Activated CD4-positive, alpha-beta memory T cell treated with anti-CD3 and anti-CD28 coated beads for 36 hours (primary cell): ENCODE measurements at regions of chr11 and their contacts with region 1.

Region 1: DNA sequence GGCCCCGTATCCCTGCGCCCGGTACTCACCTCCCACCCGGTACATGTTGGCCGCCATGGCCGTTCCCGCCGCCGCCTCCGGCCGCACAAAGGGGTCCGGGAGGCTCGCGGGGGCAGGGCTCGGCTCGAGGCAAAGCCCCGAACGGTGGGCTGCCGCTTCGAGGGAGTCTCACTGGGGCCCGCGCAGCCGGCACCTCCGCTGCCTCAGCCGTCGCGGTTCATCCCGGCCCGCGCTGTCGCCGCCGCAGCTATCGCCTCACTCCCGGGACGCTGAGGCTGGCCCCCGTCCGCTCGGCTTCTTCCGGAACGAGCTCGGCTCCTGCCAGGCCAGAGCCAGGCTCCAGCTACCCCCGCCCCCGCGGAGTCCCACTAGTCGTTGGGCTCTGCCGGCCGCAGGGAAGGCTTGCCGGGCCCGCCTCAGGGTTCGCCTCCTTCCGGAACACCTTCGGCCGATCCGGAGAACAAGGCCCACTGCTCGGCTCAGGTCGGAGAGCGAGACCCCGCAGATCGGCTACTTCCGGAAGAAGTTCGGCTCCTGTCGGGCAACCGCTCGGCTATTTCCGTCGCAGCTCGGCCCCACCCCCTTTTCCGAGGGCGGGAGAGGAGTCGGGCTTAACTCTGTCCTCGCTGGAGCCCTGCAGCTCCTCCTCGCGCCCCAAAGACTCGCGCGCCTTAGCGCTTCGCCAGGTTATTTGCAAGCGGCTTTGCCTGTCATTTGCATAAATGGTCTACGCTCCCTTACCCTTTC is at the start of gene MTA2:
- DNase-seq: peak; percentile 100
- H3K4me3 Mint-ChIP-seq: peak within 1 kb of the TSS; percentile 81
- H3K27ac Mint-ChIP-seq: peak within 1 kb of the TSS; percentile 97
- H3K4me1 Mint-ChIP-seq: peaks cover 56% of the 10 kb centered on the region
- H3K27me3 Mint-ChIP-seq: no peaks in the 10 kb centered on the region
- total RNA-seq, gene MTA2: 166 to 167 TPM

Region 2: GRCh38 chr11:62081378-62082291 is 519.9 kb before region 1 on chr11:
- CTCF ChIA-PET with region 1: no interaction called
- POLR2A ChIA-PET with region 1: no interaction called
- intact Hi-C with region 1: no loop called
- DNase-seq: peak; percentile 90
- H3K4me3 Mint-ChIP-seq: no peak overlapping the region
- H3K27ac Mint-ChIP-seq: no peak overlapping the region
- H3K4me1 Mint-ChIP-seq: peaks cover 6% of the 10 kb centered on the region
- H3K27me3 Mint-ChIP-seq: peaks cover 4% of the 10 kb centered on the region

Region 3: DNA sequence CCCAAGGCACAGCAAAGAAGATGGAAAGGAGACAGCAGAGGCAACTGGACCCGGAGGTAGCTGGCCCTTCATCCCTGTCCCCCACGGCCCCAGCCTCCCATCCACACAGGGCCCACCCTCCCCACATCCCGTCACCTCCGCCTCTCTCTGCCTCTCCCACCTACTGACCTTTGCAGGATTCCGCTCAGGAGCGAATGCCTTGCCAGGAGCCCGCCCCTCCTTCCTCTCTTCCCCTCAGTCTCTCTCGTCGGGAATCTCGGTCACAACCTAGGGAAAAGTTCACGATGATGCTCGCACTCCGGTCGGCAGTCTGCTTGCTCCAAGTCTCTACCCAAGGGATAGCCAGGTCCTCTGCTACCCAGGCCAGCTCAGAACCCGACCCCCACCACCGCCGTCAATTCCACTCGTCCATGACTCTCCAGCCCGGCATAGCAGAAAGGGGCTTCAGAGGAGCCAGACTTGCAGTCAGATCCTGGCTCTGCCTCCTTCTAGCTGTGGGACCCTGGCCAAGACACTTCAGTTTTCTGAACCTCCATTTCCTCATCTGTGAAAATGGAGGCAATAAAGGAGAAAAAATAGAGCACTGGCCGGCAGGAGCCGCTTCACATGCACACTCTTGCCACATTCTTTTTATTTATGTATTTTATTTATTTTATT is 65.1 kb before region 1 on chr11:
- CTCF ChIA-PET with region 1: no interaction called
- POLR2A ChIA-PET with region 1: no interaction called
- intact Hi-C with region 1: no loop called
- DNase-seq: no peak
- H3K4me3 Mint-ChIP-seq: no peak overlapping the region
- H3K27ac Mint-ChIP-seq: no peak overlapping the region
- H3K4me1 Mint-ChIP-seq: peaks cover 44% of the 10 kb centered on the region
- H3K27me3 Mint-ChIP-seq: no peaks in the 10 kb centered on the region

Region 4: DNA sequence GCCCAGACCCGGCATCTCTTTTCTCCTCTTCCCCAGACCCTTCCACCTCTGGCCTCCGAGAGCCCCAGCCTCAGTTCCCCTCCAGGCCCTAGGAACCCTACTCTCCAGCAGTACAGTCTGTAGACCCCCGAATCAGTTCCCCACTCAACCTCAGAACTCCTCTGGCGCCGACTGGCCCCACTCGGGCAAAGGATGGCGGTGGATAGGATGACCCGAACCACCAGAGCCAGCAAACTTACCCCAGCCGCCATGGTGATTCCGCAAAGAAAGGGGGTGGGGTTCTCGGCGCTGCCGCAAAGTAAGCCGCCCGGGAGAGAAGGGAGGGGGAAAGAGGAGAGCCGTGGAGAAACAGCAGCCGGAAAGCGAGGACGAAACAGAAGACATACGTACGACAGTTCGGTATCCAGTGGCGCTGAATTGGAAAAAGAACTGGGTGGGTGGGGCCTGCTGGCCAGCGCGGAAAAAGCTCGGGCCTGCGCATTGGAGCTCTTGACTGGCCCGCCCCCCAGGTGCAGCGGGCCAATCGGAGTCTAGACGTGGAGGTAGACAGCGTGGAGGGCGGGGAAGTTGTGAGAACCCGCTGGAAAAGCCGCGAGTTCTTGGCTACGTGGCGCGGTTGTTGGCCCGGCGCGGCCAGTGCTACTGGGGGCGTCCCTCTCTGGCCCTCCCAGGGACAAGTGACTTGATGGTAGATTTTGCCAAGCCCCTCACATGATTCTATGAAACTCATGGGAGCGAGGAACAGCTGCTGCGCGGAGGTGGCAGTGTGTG is 27.8 kb before region 1 on chr11 and contains the start of gene EEF1G:
- CTCF ChIA-PET with region 1: no interaction called
- POLR2A ChIA-PET with region 1: interaction called, 7 read pairs
- intact Hi-C with region 1: loop called (anchors 1 kb)
- DNase-seq: peak; percentile 99
- H3K4me3 Mint-ChIP-seq: peak within 1 kb of the TSS; percentile 93
- H3K27ac Mint-ChIP-seq: peak within 1 kb of the TSS; percentile 96
- H3K4me1 Mint-ChIP-seq: peaks cover 50% of the 10 kb centered on the region
- H3K27me3 Mint-ChIP-seq: no peaks in the 10 kb centered on the region
- total RNA-seq, gene EEF1G: 1,956 to 1,989 TPM

Region 5: DNA sequence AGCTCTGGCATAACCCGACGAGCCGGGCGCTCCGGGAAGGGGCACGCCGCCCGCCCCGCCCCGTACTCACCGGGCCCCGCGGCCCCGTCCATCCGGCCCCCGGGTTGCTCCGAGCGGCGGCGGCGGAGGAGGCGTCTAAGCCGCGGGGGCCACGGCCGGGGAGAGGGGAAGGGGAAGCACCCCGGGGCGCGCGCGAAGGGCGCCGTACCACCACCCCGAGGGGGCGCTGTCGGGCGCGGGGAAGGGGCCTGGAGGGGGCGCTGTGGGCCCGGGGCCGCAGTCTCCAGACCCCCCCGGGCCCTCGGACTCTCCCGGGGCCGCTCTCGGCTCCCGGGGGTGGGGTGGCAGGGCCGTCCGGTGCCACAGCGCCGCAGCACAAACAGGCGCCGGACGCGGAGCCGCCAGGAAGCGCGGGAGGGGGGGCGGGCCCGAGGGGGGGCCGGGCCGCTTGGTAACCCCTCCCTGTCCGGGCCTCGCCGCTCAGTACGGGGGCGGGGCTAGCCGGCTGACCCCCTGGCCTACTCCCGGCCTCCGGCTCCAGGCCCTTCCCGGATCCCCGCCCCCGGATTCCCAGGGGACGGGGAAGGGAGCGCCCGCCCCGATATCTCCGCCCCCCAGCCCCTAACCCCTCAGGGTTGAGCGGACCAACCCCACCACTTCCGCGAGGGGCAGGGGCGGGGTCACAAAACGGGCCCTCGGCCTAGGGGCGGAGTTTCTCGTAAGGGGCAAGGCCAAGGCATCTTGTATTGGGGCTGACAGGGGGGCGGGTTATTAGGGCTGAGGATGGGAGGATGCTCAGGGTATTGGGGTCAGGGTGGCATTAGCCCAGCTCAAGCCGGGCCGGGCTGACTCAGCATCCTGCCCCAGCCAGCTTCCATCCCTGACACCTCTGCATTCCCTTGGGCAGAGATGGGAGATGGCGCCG is 11.1 kb after region 1 on chr11 and contains the starts of genes EML3 and ROM1:
- CTCF ChIA-PET with region 1: interaction called, 29 read pairs
- POLR2A ChIA-PET with region 1: interaction called, 38 read pairs
- intact Hi-C with region 1: loop called (anchors 1 kb)
- DNase-seq: peak; percentile 90
- H3K4me3 Mint-ChIP-seq: peak within 1 kb of the TSS; percentile 90
- H3K27ac Mint-ChIP-seq: peak within 1 kb of the TSS; percentile 95
- H3K4me1 Mint-ChIP-seq: peaks cover 45% of the 10 kb centered on the region
- H3K27me3 Mint-ChIP-seq: no peaks in the 10 kb centered on the region
- total RNA-seq, gene EML3: 113 to 116 TPM
- total RNA-seq, gene ROM1: 1.1 to 1.5 TPM

Region 6: DNA sequence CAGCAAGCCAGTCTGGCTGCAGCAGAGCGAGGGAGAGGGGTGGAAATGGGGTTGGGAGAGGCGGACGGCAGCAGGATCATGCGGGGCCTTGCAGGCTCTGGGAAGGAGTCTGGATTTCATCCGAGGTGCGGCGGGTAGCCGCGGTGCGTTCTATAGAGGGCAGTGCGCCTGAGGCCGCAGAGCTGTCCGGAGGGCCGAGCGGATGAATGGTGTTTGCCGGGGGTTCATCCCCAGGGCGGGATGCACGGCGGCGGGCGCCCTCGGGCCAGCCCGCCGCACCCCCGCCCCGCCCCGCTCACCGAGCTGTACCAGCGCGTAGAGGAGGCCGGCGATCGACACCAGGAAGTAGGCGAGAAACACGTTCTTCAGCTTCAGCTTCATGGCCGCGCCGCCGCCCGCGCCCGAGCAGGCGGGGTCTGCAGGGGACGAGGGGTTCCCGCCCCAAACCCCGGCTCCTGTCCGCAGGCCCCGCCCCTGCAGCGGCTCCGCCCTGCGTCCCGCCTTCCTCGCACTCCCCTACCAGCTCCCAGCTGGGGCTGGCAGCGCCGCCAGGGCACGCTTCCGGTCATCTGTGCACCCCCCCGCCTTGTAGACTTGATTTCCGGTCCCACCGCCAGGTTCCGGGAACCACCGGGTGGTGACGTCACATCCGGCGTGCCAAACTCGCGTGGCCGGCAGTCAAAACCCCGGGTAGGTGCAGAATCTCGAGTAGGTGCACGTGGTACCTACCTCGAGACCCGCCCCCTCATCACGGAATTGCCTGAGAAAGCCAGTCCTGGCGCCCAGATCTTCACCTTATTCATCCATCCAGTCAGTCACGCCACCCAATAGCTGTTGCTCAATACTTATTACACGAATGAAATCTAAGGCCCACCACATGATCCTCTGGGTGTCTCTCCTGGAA is 20.3 kb after region 1 on chr11 and contains the start of gene B3GAT3:
- CTCF ChIA-PET with region 1: interaction called, 6 read pairs
- POLR2A ChIA-PET with region 1: interaction called, 9 read pairs
- intact Hi-C with region 1: loop called (anchors 1 kb)
- DNase-seq: peak; percentile 98
- H3K4me3 Mint-ChIP-seq: peak within 1 kb of the TSS; percentile 97
- H3K27ac Mint-ChIP-seq: peak within 1 kb of the TSS; percentile 96
- H3K4me1 Mint-ChIP-seq: peaks cover 22% of the 10 kb centered on the region
- H3K27me3 Mint-ChIP-seq: no peaks in the 10 kb centered on the region
- total RNA-seq, gene B3GAT3: 67.0 to 70.4 TPM

Region 7: GRCh38 chr11:62632492-62632891 is 30.9 kb after region 1 on chr11:
- CTCF ChIA-PET with region 1: no interaction called
- POLR2A ChIA-PET with region 1: no interaction called
- intact Hi-C with region 1: no loop called
- DNase-seq: no peak
- H3K4me3 Mint-ChIP-seq: no peak overlapping the region
- H3K27ac Mint-ChIP-seq: no peak overlapping the region
- H3K4me1 Mint-ChIP-seq: peaks cover 16% of the 10 kb centered on the region
- H3K27me3 Mint-ChIP-seq: no peaks in the 10 kb centered on the region

Region 8: DNA sequence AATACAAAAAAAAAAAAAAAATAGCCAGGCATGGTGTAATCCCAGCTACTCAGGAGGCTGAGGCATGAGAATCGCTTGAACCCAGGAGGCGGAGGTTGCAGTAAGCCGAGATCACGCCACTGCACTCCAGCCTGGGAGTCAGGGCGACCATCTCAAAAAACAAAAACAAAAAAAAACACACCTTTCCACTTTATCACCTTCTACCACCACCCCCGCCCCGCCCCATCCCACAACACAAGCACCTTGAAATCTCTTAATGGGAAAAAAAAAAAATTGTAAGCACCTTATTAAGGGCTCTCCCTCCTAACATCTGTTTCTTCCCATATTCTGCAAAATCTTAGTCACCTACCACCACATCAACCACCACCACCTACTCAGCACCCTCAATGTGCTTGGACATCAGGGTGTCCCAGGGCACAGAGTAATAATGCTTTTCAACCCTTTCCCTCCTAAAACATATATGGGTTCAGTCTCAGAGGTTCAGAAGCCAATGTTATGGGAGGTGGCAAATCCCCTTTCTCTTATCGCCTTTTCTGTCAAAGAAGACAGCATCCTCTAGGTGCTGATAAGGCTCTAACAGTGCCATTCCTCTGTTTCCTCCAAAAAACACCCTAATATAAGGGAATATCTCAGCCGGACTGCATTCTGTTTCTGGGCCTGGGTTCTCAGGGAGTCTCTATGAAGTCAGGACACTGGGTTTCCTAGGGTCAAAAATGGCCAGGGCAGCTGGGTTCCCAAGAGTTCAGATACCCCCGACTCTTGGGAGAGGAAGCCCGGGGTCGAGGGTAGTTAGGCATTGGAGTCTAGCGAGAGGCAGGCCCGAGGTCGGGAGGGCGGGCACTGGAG is 50.8 kb after region 1 on chr11:
- CTCF ChIA-PET with region 1: no interaction called
- POLR2A ChIA-PET with region 1: interaction called, 5 read pairs
- intact Hi-C with region 1: loop called (anchors 1 kb)
- DNase-seq: peak; percentile 59
- H3K4me3 Mint-ChIP-seq: peak overlapping the region; percentile 85
- H3K27ac Mint-ChIP-seq: peak overlapping the region; percentile 81
- H3K4me1 Mint-ChIP-seq: peaks cover 22% of the 10 kb centered on the region
- H3K27me3 Mint-ChIP-seq: no peaks in the 10 kb centered on the region

Region 9: GRCh38 chr11:62705880-62706849 is 104.6 kb after region 1 on chr11:
- CTCF ChIA-PET with region 1: interaction called, 5 read pairs
- POLR2A ChIA-PET with region 1: interaction called, 4 read pairs
- intact Hi-C with region 1: loop called (anchors 1 kb)
- DNase-seq: peak; percentile 96
- H3K4me3 Mint-ChIP-seq: peak overlapping the region; percentile 85
- H3K27ac Mint-ChIP-seq: peak overlapping the region; percentile 70
- H3K4me1 Mint-ChIP-seq: peaks cover 50% of the 10 kb centered on the region
- H3K27me3 Mint-ChIP-seq: no peaks in the 10 kb centered on the region